SK-N-SH (cell line): ENCODE measurements at regions of chr9 and their contacts with region 1.

Region 1: DNA sequence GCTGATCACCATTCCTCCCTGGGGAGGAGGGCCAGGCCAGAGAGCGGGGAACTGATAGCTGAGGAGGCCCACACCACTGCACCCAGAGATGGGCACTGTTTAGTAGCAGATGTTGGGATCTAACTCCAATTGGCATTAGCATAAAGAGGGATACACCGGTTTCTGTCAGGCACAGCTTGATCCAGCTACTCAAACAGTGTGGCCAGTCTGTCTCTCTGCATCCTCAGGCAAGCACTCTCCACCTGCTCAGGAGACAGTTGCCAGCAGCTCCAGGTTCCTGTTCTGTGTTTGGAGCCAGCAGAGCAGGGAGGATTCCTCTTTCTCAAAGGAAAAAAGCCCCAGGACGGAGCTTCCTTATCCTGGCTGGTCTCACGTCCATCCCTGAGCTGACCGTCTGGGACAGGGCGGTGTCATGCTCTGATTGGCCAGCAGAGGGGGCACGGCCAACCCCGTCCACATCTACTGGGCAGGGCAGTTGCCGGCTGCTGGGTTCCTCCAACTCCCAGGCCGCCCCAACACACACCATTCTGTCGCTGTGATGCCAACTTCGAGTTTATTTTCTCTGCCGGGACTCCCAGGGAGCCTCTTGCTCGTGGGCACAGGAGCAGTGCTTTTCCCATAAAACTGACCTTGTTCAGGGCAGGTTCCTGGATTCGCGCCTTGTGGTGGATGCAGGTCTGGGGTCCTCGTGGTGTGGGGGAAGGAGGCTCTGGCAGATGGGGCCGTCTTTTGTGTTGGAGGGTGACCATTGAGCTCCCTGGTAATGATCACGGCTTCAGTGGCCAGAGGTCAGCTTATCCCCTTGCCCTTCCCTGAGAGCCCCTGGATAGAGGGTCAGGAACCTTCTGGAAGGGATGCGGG is 47.9 kb downstream of the COL5A1 start:
- DNase-seq: peak; percentile 88
- H3K4me3 ChIP-seq: no peak overlapping the region; a peak in 1 of 4 replicates
- H3K27ac ChIP-seq: 0 out of 4 replicates have a peak overlapping the region, but pooled peaks of 1 of the 2 experiments have one; percentile 5
- H3K4me1 ChIP-seq: peaks cover 0 to 36% of the 10 kb centered on the region in 2 experiments; a peak in 1 of 4 replicates
- H3K27me3 ChIP-seq: no peaks in the 10 kb centered on the region
- CTCF ChIP-seq: peak; percentile 75
- EP300 ChIP-seq: no peak
- RAD21 ChIP-seq: peak; percentile 55

Region 2: DNA sequence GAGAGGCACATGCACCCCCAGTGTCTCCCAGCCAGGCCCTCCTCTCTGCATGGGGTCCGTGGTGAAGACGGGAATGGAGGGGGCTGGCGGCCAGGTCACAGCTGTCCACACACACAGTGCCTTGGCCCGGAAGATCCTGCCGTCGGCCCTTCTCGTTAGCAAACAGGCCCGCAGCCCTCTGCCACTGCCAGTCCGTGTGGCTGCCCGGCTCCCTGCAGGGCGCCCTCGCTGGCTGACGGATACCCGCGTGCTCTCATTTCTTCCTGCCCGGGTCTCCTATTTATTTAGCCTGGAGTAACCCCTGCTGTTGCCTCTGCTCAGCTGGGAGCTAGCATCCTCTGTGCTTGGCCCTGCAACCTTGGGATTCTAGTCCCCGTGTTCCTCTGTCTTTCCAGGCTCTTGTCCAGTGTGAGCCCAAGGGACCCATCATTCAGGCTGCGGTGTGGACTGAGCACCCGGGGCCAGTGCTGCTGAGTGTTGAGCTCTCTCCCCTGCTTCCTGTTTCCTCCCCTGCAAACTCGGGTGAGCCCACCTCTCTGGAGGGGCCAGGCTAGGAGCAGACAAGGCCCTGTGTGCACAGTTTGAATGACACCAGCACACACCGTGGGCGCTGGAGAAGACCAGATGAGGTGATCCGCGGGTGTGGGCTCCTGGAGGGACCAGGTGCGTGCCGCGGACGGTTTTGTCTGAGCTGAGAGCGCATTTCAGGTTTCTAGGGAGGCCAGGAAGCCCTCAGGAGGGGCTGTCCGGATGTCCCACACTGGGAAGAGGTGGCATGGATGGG is 510.6 kb before region 1 on chr9:
- CTCF ChIA-PET with region 1: interaction called, 12 read pairs
- POLR2A ChIA-PET with region 1: no interaction called
- DNase-seq: peak; percentile 54
- H3K4me3 ChIP-seq: no peak overlapping the region
- H3K27ac ChIP-seq: no peak overlapping the region
- H3K4me1 ChIP-seq: peaks cover 0 to 7% of the 10 kb centered on the region in 2 experiments; a peak in 1 of 4 replicates
- H3K27me3 ChIP-seq: peaks cover 7% of the 10 kb centered on the region; the same call in 1 of the 2 replicates
- CTCF ChIP-seq: no peak
- EP300 ChIP-seq: no peak
- RAD21 ChIP-seq: no peak

Region 3: DNA sequence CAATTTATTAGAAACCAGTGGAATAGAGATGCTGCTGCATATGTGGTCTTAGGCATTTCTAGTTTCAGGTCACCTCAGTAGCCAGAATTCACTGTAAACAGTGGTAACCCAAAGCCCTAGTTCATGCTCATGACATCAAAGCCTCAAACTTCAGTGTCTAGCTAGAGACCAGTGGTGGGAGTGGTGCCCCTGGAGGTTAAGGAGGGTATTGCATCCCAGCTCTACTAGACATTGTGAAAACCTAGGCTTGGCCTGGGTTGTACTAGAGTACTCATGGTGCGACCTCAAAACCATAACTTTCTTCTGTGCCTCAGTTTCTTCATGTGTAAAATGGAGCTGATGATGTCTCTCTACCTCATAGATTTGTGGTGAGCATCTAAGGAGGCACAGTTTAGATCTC is 29.1 kb before region 1 on chr9:
- CTCF ChIA-PET with region 1: interaction called, 24 read pairs
- POLR2A ChIA-PET with region 1: no interaction called
- DNase-seq: no peak
- H3K4me3 ChIP-seq: no peak overlapping the region
- H3K27ac ChIP-seq: peak overlapping the region; percentile 92 to 97; a peak in 3 of 4 replicates
- H3K4me1 ChIP-seq: peaks cover 26 to 40% of the 10 kb centered on the region in 2 experiments
- H3K27me3 ChIP-seq: no peaks in the 10 kb centered on the region
- CTCF ChIP-seq: peak; percentile 73
- EP300 ChIP-seq: no peak
- RAD21 ChIP-seq: no peak

Region 4: DNA sequence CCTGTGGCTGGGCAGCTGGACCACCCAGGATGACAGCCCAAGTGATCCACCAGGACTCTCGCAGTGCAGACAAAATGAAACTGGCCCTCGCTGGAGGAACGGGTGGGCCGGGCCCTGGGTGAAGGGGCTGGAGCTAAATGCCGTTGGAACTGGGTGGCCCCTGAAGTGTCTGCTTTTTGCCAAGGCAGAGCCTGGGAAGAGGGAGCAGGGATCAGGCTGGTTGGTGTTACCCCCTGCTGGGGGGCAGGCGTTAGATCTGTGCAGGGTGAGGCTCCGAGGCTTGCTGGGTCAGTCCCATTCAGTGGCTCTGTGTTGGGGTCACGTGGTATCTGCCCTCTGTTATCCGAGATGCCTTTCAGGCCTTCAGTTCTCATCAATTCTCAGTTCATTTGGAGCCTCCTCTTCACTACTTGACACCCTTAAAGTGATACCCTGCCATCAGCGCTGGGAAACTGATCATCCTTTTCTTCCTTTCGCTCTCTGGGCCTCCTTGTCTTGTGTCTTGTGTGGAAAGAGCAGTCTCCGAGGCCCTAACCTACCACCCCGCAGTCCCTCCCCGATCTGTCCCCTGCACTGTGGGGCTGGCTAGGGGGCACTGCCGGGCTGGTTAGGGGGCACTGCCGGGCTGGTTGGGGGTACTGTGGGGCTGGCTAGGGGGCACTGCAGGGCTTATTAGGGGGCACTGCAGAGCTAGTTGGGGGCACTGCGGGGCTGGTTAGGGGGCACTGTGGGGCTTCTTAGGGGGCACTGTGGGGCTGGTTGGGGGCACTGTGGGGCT is 10.7 kb before region 1 on chr9:
- CTCF ChIA-PET with region 1: interaction called, 32 read pairs
- POLR2A ChIA-PET with region 1: no interaction called
- DNase-seq: no peak
- H3K4me3 ChIP-seq: no peak overlapping the region
- H3K27ac ChIP-seq: no peak overlapping the region
- H3K4me1 ChIP-seq: no peaks in the 10 kb centered on the region
- H3K27me3 ChIP-seq: no peaks in the 10 kb centered on the region
- CTCF ChIP-seq: no peak
- EP300 ChIP-seq: no peak
- RAD21 ChIP-seq: no peak

Region 5: DNA sequence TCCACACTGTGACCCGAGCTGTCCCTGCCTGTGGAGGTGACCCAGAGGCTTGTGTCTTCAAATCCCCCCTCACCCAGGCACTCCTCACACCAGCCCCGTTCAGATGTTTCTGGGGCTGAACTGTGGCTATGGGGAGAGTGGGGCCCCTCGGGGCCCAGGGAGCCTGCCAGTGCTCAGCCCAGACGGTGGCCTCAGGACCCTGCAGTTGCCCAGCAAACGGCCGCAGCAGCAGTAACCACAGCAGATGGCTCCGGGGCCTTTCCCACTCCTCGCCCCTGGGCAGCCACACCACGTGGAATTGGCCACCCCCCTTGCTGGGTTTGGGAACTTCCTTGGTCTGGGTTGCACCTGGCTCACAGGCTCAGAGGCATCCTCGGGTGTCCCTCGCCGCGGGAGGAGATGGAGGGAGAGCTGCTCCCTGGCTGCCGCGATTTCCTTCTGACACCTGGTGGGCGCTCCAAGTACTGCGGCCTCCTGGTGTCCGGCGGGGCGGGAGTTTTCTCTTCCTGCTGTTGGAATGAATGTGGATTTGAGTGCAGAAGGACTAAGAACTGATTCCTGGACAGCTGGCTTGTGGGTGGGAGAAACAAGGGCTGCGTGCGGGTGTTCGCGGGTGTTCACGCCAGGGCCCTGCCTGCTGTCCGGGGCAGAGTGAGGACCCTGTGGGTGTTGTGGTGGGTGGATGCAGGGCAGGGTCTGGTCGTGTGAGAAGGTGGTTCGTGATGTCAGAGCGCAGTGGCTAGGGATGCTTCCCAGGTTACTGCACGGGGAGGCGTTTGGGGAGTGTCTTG is 49.5 kb after region 1 on chr9:
- CTCF ChIA-PET with region 1: interaction called, 122 read pairs
- POLR2A ChIA-PET with region 1: no interaction called
- DNase-seq: peak; percentile 94
- H3K4me3 ChIP-seq: no peak overlapping the region
- H3K27ac ChIP-seq: 0 out of 4 replicates have a peak overlapping the region, but pooled peaks of 1 of the 2 experiments have one; percentile 18
- H3K4me1 ChIP-seq: peaks cover 4 to 12% of the 10 kb centered on the region in 2 experiments; a peak in 2 of 4 replicates
- H3K27me3 ChIP-seq: no peaks in the 10 kb centered on the region
- CTCF ChIP-seq: peak; percentile 77
- EP300 ChIP-seq: no peak
- RAD21 ChIP-seq: peak; percentile 91